Panc1 (cell line): ENCODE measurements at regions of chr1 and their contacts with region 1.

Region 1: DNA sequence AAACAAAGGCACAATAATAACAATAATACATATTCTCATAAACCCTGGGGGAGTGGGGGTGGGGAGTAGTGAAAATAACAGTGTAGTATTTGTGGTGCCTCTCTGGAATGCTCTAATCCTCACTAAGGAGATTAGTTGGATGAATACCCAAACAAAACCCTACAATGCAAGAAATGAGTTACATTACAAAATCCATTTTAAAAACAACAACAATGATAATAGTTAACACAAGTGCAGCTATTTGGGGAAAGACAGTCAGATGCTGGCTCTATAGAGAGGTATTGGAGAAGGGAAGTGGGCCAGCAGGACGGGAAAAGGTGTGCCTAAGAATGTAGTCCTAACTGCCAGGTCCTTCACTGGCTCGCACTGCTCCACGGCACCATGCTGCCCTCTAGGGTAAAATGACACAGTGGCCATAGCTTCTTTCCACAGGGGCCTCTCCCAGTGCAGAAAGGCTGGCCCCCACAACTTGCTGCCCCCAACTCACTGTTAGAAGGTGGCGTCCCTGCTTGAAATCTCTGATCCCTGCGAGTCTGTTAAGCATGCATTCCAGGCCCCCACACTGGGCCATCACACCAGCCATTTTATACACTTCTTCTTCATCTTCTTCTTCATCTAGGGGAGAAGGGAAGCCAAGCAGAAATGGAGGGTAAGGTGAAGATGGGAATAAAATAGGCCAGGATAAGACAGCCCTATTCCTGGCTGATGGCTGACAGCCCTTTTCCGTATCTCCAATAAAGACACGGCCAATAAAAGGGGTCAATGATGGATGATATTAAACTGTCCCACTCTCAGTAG is 113.8 kb downstream of the UBR4 start:
- DNase-seq: peak; percentile 8
- ATAC-seq: peak; percentile 87
- H3K4me3 ChIP-seq: no peak overlapping the region
- H3K27ac ChIP-seq: no peak overlapping the region
- H3K4me1 ChIP-seq: no peaks in the 10 kb centered on the region
- H3K27me3 ChIP-seq: no peaks in the 10 kb centered on the region
- CTCF ChIP-seq: peak; percentile 74

Region 2: GRCh38 chr1:18902523-18903290 is 193.5 kb before region 1 on chr1 and contains the start of gene ALDH4A1:
- CTCF ChIA-PET with region 1: interaction called, 8 read pairs
- POLR2A ChIA-PET with region 1: no interaction called
- in situ Hi-C with region 1: no loop called
- intact Hi-C with region 1: loop called (anchors 10 kb)
- DNase-seq: peak; percentile 90
- ATAC-seq: peak; percentile 96
- H3K4me3 ChIP-seq: peak within 1 kb of the TSS; percentile 81 to 93
- H3K27ac ChIP-seq: peak within 1 kb of the TSS; percentile 95
- H3K4me1 ChIP-seq: peaks cover 37% of the 10 kb centered on the region
- H3K27me3 ChIP-seq: no peaks in the 10 kb centered on the region
- CTCF ChIP-seq: no peak
- total RNA-seq, gene ALDH4A1: 21.7 TPM

Region 3: DNA sequence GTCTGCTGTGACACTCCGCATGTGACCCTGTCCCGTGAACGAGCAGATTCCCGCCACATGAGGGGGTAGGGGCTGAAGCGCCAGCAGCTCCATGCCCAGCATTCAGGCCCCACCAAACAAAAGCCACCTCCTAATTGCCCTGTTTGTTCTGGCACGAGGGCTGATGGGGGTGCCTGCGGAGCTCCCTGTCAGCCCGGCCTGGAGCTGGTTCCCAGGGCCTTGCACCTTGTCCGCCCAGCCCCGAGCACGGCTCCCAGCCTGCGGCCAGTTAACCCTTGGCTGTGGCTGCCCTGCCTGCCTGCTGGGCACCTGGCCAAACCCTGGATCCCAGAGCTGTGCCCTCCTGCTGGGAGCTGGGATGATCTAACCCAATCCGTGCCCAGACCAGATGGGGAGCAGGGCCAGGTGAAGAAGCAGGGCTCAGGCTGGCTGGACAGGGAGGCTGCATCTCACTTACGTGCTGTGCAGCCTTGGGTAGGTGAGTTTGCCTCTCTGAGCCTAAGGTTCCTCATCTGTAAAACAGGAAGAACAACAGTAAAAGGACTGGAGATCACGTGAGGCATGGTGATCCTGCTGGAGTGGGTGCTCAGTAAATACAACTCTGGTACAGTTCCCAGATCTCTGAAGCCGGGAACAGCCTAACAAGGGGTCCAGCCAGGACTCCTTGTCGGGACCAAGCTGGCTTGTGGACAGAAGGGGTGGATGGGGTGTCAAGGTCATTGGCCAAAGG is 28.9 kb before region 1 on chr1:
- CTCF ChIA-PET with region 1: no interaction called
- POLR2A ChIA-PET with region 1: no interaction called
- in situ Hi-C with region 1: no loop called
- intact Hi-C with region 1: no loop called
- DNase-seq: no peak
- ATAC-seq: peak; percentile 32
- H3K4me3 ChIP-seq: no peak overlapping the region
- H3K27ac ChIP-seq: peak overlapping the region; percentile 76
- H3K4me1 ChIP-seq: peaks cover 45% of the 10 kb centered on the region
- H3K27me3 ChIP-seq: no peaks in the 10 kb centered on the region
- CTCF ChIP-seq: no peak